Activated CD4-positive, alpha-beta T cell treated with anti-CD3 and anti-CD28 coated beads for 36 hours (primary cell): ENCODE measurements at regions of chr13 and their contacts with region 1.

Region 1: DNA sequence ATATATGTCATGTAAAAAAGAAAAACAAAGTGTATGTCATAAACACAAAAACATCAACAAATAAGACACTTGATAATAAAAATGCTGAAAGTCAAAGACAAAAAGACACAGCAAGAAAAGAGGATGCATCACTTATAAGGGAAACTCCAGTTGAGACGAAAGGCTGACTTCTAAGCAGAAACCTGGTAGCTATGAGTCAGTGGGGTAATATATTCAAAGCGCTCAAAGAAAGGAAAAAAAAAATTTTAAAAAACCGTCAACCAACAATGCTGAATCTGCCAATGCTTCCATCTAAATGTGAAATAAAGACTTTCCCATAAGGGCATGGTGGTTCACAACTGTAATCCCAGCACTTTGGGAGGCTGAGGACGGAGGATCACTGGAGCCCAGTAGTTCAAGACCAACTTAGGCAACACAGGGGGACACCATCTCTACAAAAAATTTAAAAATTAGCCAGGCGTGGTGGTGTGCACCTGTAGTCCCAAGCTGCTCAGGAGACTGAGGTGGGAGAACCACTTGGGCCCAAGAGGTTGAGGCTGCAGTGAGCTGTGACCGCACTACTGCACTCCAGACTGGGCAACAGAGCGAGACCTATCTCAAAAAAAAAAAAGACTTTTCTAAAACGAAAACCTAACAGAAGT is 24.0 kb downstream of the USP12 start:
- DNase-seq: no peak
- ATAC-seq: peak; percentile 89
- H3K4me3 Mint-ChIP-seq: peak overlapping the region; percentile 49
- H3K27ac Mint-ChIP-seq: peak overlapping the region; percentile 96
- H3K4me1 Mint-ChIP-seq: peaks cover 73% of the 10 kb centered on the region
- H3K27me3 Mint-ChIP-seq: no peaks in the 10 kb centered on the region

Region 2: DNA sequence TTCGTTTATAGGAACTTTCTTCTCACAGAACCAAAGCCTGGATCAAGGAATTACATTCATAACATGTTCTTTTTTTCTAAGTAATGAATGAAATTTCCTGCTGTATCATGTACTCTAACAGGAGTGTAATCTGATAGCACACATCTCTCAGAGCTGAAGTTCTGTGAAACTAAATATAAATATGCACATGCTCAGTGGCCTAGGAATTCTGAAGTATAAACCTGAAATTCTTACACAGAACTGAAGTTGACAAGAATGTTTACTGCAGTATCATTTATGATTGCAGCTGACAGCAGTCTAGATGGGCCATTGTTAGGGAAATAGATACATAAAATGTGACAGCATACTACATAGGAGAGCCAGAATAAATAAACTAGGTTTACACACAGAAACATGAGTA is 30.5 kb before region 1 on chr13:
- CTCF ChIA-PET with region 1: no interaction called
- POLR2A ChIA-PET with region 1: no interaction called
- intact Hi-C with region 1: no loop called
- DNase-seq: no peak
- ATAC-seq: no peak
- H3K4me3 Mint-ChIP-seq: no peak overlapping the region
- H3K27ac Mint-ChIP-seq: no peak overlapping the region
- H3K4me1 Mint-ChIP-seq: peaks cover 35% of the 10 kb centered on the region
- H3K27me3 Mint-ChIP-seq: no peaks in the 10 kb centered on the region

Region 3: GRCh38 chr13:27160657-27161295 is 13.1 kb after region 1 on chr13:
- CTCF ChIA-PET with region 1: interaction called, 5 read pairs
- POLR2A ChIA-PET with region 1: interaction called, 10 read pairs
- intact Hi-C with region 1: no loop called
- DNase-seq: no peak
- ATAC-seq: no peak
- H3K4me3 Mint-ChIP-seq: no peak overlapping the region
- H3K27ac Mint-ChIP-seq: no peak overlapping the region
- H3K4me1 Mint-ChIP-seq: peaks cover 57% of the 10 kb centered on the region
- H3K27me3 Mint-ChIP-seq: no peaks in the 10 kb centered on the region